ENCODE measurements at regions of chr19 and their contacts with region 1.

Region 1: DNA sequence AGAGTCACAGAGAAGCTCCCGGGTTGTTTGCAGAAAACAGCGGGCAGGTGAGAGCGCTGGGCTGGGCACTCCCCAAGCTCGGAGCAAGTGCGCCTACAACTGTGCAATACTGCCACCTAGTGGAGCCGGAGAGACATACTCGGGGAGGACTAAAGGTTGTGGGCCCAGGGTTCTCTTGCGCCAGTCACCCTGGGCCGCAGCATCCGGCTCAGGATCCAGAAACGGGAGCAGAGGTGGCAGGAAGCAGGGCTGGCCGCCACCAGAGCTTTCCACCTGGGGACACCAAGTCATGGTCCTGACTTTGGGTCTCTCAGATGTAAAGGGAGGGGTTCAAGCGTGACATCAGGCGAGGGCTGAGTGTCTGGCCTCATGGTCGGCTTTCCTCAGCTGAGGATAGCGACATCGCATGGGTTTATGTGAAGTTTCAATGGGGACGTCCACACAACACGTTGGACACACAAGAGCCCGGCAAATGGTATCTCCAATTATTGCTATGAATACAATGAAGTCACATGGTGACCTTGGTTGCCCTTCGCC is 11.2 kb upstream of the KLK4 start:
- DNase-seq: peak; percentile 88
- H3K4me3 Mint-ChIP-seq: no peak overlapping the region
- H3K27ac Mint-ChIP-seq: no peak overlapping the region
- H3K4me1 Mint-ChIP-seq: peaks cover 7% of the 10 kb centered on the region
- H3K27me3 Mint-ChIP-seq: peaks cover 28% of the 10 kb centered on the region

Region 2: DNA sequence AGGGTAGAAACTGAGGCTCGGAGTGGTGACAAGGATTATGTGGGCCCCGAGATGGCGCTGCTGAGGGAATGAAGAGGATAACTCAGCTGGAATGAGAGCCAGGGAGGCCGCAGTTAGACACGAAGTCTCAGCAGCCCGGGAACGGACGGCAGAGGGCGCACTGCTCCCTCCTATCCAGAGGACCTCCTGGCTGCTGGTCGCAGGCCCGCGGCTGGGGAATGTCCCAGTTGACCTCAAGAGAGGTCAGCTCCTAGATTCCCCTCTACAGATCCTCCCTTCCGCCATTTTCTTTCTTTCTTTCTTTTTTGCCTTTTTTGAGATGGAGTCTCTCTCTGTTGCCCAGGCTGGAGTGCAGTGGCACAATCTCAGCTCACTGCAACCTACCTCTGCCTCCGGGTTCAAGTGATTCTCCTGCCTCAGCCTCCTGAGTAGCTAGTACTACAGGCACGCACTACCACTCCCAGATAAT is 384.6 kb before region 1 on chr19:
- CTCF ChIA-PET with region 1: interaction called, 8 read pairs
- intact Hi-C with region 1: loop called (anchors 1 kb)
- DNase-seq: peak; percentile 84
- H3K4me3 Mint-ChIP-seq: no peak overlapping the region
- H3K27ac Mint-ChIP-seq: peak overlapping the region; percentile 61
- H3K4me1 Mint-ChIP-seq: peaks cover 5% of the 10 kb centered on the region
- H3K27me3 Mint-ChIP-seq: peaks cover 15% of the 10 kb centered on the region

Region 3: DNA sequence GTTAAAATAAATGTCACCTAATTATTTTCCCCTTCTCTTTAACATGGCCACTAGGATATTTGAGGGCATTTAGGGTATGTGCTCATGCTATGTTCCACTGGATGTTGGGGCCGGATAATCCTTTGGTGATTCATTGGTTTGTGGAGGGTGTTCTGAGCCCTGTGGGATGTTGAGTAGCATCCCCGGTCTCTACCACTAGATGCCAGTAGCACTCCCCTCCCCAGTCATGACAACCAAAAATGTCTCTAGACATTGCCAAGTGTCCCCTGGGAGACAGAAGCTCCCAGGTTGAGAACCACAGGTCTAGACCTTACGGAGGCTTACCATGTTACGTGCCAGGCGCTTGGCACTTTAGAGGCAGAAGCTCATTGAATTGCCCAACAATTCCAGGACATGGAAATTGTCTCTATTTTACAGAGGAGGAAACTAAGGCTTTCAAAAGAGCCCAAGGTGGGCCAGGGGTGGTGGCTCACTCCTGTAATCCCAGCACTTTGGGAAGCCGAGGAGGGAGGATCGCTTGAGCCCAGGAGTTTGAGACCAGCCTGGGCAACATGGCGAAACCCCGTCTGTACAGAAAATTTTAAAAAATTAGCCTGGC is 216.9 kb before region 1 on chr19:
- CTCF ChIA-PET with region 1: interaction called, 3 read pairs
- intact Hi-C with region 1: loop called (anchors 5 kb)
- DNase-seq: peak; percentile 58
- H3K4me3 Mint-ChIP-seq: no peak overlapping the region
- H3K27ac Mint-ChIP-seq: no peak overlapping the region
- H3K4me1 Mint-ChIP-seq: no peaks in the 10 kb centered on the region
- H3K27me3 Mint-ChIP-seq: peaks cover 36% of the 10 kb centered on the region

Region 4: GRCh38 chr19:50794439-50795237 is 127.7 kb before region 1 on chr19:
- CTCF ChIA-PET with region 1: no interaction called
- intact Hi-C with region 1: loop called (anchors 1 kb)
- DNase-seq: peak; percentile 56
- H3K4me3 Mint-ChIP-seq: no peak overlapping the region
- H3K27ac Mint-ChIP-seq: peak overlapping the region; percentile 57
- H3K4me1 Mint-ChIP-seq: peaks cover 6% of the 10 kb centered on the region
- H3K27me3 Mint-ChIP-seq: no peaks in the 10 kb centered on the region

Region 5: GRCh38 chr19:50829801-50830200 is 92.6 kb before region 1 on chr19:
- CTCF ChIA-PET with region 1: no interaction called
- intact Hi-C with region 1: no loop called
- DNase-seq: no peak
- H3K4me3 Mint-ChIP-seq: no peak overlapping the region
- H3K27ac Mint-ChIP-seq: no peak overlapping the region
- H3K4me1 Mint-ChIP-seq: no peaks in the 10 kb centered on the region
- H3K27me3 Mint-ChIP-seq: peaks cover 27% of the 10 kb centered on the region

Region 6: GRCh38 chr19:51016798-51017683 is 94.7 kb after region 1 on chr19:
- CTCF ChIA-PET with region 1: no interaction called
- intact Hi-C with region 1: loop called (anchors 10 kb)
- DNase-seq: peak; percentile 32
- H3K4me3 Mint-ChIP-seq: no peak overlapping the region
- H3K27ac Mint-ChIP-seq: no peak overlapping the region
- H3K4me1 Mint-ChIP-seq: peaks cover 13% of the 10 kb centered on the region
- H3K27me3 Mint-ChIP-seq: peaks cover 62% of the 10 kb centered on the region